Activated CD4-positive, alpha-beta T cell treated with anti-CD3 and anti-CD28 coated beads for 36 hours (primary cell): ENCODE measurements at regions of chr17 and their contacts with region 1.

Region 1: DNA sequence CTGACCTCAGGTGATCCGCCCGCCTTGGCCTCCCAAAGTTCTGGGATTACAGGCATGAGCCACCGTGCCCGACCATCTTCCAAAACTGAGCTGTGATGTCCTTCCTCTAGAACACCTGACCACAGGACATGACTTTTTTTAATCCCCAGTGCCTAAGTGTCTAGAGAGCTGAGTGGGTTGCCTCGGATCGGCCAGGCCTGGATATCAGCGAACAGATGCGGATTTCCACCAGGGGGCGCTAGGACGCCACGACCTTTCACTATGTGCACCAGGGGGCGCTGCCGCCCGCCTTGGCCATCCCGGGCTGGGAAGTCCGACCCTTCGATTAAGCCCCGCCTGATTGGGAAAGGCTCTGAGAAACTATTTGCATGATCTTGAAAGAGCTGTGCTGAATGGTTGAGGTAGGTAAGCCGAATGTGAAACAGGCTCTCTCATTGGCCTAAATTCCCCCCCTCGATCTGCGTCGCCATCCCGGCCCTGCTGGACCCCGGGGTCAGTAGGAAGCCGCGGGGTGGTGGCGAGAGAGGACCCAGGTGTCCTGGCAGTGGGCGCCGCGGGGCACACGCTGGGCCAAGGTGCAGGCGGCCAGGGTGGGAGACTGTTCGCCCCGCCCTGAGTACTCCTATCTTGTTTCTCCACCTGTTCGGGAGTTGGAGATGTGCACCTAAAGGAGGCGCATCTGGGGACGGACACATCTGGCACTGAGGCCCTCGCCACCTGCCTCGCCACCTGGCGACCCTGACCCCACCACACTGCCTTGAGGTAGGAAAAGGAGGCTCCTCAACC is at the start of gene ACBD4:
- DNase-seq: peak; percentile 98
- ATAC-seq: peak; percentile 91
- H3K4me3 Mint-ChIP-seq: peak within 1 kb of the TSS; percentile 82
- H3K27ac Mint-ChIP-seq: peak within 1 kb of the TSS; percentile 87
- H3K4me1 Mint-ChIP-seq: peaks cover 9% of the 10 kb centered on the region
- H3K27me3 Mint-ChIP-seq: peaks cover 3% of the 10 kb centered on the region
- total RNA-seq, gene ACBD4: 12.7 to 13.4 TPM

Region 2: DNA sequence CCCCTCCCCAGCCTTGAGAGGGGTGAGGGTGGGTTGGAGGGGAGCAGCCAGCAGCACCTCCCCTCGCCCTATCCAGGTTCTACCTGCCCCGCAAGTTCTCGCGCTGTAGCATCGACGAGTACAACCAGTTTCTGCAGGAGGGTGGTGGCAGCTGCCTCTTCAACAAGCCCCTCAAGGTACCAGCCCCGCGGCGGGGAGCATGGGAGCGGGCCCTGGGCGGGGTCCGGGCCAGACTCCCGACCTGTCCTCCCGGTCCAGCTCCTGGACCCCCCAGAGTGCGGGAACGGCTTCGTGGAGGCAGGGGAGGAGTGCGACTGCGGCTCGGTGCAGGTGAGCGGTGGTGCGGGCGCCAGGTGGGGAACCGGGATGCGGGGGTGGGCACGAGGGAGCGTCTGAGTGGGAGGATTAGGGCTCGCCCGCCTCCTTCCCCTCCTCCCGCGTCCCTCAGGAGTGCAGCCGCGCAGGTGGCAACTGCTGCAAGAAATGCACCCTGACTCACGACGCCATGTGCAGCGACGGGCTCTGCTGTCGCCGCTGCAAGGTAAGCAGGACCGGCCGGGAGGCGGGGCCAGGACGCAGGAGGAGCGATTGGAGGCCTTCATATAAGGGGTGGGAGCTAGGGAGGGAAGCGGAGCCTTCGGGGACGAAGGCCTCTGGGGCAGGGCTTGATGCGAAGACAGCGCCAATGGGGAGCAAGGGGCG is 360.1 kb before region 1 on chr17:
- CTCF ChIA-PET with region 1: interaction called, 14 read pairs
- POLR2A ChIA-PET with region 1: no interaction called
- intact Hi-C with region 1: loop called (anchors 1 to 10 kb)
- DNase-seq: no peak
- ATAC-seq: peak; percentile 97
- H3K4me3 Mint-ChIP-seq: peak overlapping the region; percentile 77
- H3K27ac Mint-ChIP-seq: no peak overlapping the region
- H3K4me1 Mint-ChIP-seq: peaks cover 7% of the 10 kb centered on the region
- H3K27me3 Mint-ChIP-seq: no peaks in the 10 kb centered on the region

Region 3: DNA sequence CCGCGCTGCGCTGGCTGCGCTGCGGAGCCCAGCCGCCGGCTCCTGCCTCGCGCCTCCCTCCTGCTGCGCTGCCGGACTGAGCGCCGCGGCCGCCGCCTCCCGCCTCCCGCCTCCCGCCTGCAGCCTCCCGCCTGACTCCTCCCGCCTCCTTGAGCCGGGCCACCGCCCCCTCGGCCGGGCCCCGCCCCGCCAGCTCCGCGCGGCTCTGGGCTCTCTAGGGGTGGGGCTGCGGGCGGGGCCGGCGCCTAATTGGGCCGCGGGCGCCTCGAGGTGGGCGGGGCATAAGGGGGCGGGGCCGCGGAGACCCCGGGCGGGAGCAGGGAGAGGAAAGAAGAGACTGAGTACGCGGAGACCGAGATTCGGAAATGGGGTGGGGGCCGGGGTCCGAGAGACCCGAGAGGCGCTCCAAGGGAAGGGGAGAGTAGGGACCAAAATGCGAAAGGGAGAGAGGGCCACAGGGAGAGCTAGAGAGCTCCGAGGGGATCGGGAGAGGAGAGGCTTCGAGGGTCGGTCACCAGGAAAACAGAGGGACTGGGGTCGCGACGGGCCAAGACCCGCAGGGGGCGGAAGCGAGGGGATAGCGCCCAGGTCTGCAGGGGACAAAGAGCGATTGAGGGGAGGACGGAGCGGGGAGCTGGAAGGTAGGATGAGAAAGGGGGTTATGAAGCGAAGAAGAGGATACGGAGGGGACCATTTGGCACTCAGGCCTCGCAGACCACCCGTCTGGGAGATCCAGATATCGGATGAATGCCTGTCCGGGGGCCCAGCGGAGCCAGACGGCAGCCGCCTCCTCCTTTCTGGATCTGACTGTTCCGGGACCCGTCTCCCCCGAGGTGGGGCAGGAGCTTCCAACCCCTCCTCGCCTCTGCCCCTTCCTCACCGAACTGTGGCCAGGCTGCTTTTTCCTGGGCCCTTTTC is 166.9 kb before region 1 on chr17 and contains the start of gene C1QL1:
- CTCF ChIA-PET with region 1: interaction called, 3 read pairs
- POLR2A ChIA-PET with region 1: no interaction called
- intact Hi-C with region 1: loop called in 1 of 2 experiments (anchors 1 kb)
- DNase-seq: peak; percentile 93
- ATAC-seq: peak; percentile 79
- H3K4me3 Mint-ChIP-seq: peak within 1 kb of the TSS; percentile 64
- H3K27ac Mint-ChIP-seq: no peak within 1 kb of the TSS
- H3K4me1 Mint-ChIP-seq: peaks cover 44% of the 10 kb centered on the region
- H3K27me3 Mint-ChIP-seq: peaks cover 41% of the 10 kb centered on the region
- total RNA-seq, gene C1QL1: 0.37 to 0.83 TPM

Region 4: DNA sequence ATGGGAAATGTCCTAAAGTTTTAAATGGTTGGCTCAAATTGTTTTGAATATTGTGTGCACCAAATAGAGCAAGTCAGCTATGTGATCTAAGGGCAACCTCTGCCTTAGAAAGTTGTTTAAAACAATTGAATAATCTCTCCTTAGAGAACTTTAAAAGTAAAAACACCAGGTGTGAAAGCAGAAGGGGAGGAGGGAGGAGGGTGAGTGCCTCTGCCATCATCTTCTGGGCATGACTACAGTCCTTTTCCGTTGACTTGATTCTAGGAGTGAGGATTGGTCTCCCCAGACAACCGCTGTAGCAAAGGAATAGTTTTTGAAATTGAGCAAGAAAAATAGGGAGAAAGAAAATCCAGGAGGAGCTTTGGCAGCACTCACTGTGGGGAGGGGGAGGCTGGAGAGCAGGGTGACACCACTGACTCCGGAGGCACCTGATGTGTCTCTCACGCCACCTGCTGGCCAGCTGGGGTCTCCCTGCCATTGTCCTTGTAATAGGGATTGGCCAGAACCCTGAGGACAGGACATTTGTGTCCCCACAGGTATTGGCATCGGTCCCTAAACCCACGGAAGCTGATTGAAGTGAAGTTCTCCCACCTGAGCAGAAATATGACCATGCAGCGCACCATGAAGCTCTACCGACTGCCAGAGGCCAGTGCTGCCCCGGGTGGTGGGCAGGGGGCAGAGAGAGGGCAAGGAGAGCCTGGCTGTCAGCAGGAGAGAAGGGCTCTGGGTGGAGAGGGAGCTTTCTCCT is 36.3 kb before region 1 on chr17:
- CTCF ChIA-PET with region 1: interaction called, 4 read pairs
- POLR2A ChIA-PET with region 1: no interaction called
- intact Hi-C with region 1: loop called in 1 of 2 experiments (anchors 2 kb)
- DNase-seq: peak; percentile 89
- ATAC-seq: peak; percentile 98
- H3K4me3 Mint-ChIP-seq: no peak overlapping the region
- H3K27ac Mint-ChIP-seq: no peak overlapping the region
- H3K4me1 Mint-ChIP-seq: no peaks in the 10 kb centered on the region
- H3K27me3 Mint-ChIP-seq: no peaks in the 10 kb centered on the region

Region 5: DNA sequence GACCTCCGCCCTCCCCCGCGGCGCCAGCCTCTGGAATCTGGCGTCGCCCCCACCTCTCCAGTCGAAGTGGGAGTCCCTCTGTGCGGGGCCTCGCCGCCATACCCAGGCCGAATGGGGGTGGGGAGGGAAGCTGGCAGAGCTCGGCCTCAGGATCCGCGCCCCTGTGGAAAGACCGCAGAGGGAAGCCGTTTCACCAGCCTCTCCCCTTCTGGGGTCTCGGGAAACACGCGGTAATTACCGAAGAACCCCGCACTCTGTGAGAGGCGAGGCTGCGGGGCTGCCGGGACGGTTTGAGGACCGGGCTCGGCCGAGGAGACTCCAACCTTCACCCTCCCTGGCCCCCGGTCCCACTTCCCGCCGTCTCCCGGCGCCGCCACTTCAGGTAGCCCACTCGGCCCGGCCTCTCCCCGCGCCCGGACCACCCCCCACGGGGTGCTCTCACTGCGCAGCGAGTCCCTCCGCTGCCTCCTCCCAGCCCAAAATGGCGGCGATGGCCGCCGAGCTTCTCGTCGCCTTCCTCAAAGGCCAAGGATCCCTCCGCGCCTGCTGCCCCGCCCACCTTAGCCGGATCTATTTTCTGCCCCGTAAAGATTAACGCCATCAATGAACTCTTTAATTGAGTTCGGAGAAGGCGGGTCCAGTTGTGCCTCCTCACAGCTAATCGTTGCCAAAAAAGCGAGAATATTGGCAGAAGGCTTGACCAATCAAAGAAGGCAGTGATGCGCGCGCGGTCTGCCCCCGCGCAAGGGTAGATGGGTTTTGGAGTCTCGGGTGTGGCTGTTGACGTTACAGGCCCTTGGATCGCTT is 25.8 kb after region 1 on chr17:
- CTCF ChIA-PET with region 1: interaction called, 50 read pairs
- POLR2A ChIA-PET with region 1: interaction called, 6 read pairs
- intact Hi-C with region 1: loop called (anchors 1 kb)
- DNase-seq: peak; percentile 97
- ATAC-seq: peak; percentile 97
- H3K4me3 Mint-ChIP-seq: peak overlapping the region; percentile 96
- H3K27ac Mint-ChIP-seq: peak overlapping the region; percentile 96
- H3K4me1 Mint-ChIP-seq: peaks cover 26% of the 10 kb centered on the region
- H3K27me3 Mint-ChIP-seq: no peaks in the 10 kb centered on the region

Region 6: DNA sequence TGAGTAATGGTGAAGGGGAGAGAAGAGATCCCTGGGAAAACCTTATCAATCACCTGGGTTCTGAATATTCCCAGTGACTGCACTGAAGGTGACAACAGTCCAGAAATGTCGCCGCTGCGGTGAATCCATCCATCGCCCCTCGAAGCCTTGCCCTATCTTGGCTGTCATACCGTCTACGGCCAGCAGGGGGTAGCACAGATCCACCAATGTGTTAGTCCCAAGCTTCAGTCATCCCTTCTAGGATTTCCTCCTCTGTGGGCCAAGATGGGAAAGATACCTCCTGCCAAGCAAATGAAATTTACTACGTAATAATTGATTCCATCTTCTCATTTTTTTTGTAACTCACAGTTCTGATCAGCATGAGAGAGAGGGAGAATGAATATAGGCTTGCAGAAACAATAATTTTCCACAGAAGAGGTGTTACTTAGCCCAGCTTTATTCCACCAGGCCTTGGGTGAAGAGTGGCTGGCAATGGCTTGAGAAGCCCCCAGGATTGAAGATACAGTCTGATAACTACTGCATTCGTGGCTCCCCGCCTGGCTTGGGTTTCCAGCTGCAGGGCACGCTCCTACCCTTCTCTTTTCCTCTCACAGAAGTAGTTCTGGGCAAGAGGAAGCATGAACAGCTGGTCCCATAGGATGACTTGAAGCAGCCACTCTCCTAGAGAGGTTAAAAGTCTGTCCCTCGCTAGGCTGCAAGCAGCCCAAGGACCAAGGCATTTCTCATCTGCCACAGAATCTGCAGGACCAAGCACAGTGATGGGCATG is 83.7 kb after region 1 on chr17:
- CTCF ChIA-PET with region 1: interaction called, 30 read pairs
- POLR2A ChIA-PET with region 1: no interaction called
- intact Hi-C with region 1: no loop called
- DNase-seq: peak; percentile 92
- ATAC-seq: no peak
- H3K4me3 Mint-ChIP-seq: peak overlapping the region; percentile 78
- H3K27ac Mint-ChIP-seq: peak overlapping the region; percentile 79
- H3K4me1 Mint-ChIP-seq: peaks cover 33% of the 10 kb centered on the region
- H3K27me3 Mint-ChIP-seq: no peaks in the 10 kb centered on the region

Region 7: DNA sequence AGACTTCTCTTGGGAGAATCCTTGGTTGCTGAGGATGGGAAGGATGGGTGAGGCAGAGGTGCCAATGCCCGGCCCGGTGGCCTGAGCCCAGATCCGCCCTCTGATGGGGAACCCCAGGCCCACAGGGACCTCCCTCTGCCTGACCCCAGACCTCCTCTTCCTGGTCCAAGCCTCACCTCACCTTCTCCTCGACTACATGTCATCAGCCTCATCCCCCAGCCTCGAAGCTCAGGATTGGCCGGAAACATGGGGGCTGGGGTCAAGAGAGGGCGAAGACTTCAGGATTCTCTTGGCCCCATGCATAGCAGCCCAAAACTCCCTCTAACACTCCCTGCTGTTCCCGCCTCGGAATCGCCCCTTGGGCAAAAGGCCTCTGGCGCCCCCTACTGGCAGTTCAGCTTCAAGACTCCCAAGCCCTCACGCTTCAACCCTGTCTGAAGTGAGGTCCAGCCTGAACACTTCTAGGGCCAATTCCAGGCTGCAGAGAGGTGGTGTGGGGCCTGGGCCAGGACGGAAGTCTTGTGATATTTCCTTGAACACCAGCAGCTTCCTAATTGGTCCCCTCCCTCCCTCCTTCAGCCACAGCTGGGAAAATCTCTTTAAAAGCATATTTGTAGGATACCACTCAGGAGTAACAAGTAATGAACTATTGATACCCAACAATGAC is 250.1 kb after region 1 on chr17:
- CTCF ChIA-PET with region 1: interaction called, 4 read pairs
- POLR2A ChIA-PET with region 1: no interaction called
- intact Hi-C with region 1: loop called in 1 of 2 experiments (anchors 1 kb)
- DNase-seq: peak; percentile 96
- ATAC-seq: peak; percentile 96
- H3K4me3 Mint-ChIP-seq: no peak overlapping the region
- H3K27ac Mint-ChIP-seq: peak overlapping the region; percentile 71
- H3K4me1 Mint-ChIP-seq: peaks cover 14% of the 10 kb centered on the region
- H3K27me3 Mint-ChIP-seq: peaks cover 4% of the 10 kb centered on the region